ENCODE measurements at regions of chr11 and their contacts with region 1.

Region 1: DNA sequence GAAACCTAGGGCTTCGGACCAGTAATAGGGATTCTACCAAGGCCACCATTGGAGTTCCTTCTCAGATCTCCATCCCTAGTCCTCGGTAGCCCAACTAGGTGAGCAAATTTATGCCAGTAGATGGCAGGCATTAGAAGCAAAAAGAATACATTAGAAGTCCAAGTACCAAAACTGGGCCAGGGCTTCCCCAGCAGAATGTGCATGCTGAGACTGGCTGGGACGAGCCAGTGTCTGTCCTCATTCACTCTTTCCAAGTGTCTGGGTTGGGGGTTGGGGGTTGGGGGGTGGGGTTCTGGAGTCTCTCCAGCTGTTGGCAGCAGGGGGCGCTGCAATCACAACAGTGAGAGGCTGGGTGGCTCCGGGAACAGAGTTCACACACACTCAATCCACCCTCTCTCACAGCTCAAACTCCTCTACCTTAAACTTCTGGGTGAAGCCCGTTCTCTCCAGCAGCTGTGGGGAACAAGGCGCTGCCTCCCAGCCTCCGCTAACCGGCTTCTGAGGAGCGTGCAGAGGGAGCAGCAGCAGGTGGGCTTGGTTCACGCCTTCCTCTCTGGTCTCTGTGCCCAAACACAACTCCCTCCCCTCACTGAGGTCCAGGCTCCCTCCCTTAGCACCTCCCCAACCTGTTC is 57.5 kb downstream of the BTG4 start:
- DNase-seq: peak in 8 of 10 donors; percentile 23 to 70 (median 62)
- H3K4me3 ChIP-seq: no peak overlapping the region
- H3K27ac ChIP-seq: peak overlapping the region in 33 of 59 donors; percentile 6 to 94 (median 57)
- H3K27me3 ChIP-seq: peaks cover 0 to 5% (median 0%) of the 10 kb centered on the region in 45 donors
- CTCF ChIP-seq: peak in 53 of 56 donors; percentile 23 to 83 (median 65)

Region 2: DNA sequence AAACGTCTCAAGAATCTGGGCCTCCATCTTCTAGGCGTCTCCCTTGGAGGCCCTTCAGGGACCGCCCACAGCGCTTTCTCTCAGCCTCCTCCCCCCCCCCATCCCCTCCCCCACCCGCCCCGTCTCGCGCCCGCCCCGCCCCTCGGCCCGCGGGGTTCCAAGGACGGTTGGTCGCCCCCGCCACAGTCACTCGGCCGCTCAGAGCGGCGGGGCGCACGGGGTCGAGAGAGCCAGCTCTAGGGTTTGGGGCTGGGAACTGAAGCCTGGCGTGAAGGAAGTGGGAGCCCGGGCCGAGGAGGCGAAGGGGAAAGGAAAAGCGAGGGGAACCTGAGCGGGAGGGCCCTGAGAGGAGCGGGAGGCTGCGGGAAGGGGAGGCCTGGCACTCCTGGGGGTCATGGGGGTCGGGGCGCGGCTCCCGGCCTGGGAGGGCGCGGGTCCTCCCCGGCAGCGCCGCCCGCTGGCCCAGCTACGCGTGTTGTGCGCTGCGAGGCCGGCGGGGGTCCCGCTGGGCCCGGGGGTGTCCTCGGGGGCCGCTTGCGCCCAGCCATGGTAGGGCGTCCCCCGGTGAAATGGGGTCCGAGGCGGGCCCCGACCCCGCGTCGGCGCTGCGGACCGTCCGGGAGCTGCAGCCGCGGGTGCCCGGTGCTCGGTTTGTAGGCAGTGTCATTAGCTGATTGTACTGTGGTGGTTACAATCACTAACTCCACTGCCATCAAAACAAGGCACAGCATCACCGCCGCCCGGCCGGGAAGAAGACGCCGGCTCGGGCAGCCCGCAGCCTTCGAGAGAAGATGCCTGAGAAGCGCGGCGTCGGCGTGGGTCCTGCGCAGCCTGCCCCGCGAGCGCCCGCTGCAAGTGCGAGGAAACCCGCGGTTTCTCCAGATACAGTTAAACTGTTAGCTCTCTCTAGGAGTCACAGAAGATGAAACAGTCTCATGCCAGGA is 57.9 kb after region 1 on chr11 and contains the start of gene BTG4:
- intact Hi-C with region 1: loop called (anchors 5 kb)
- DNase-seq: peak in 4 of 10 donors; percentile 7 to 47 (median 30)
- H3K4me3 ChIP-seq: peak within 1 kb of the TSS; percentile 21 to 69 (median 56)
- H3K27ac ChIP-seq: peak within 1 kb of the TSS in 8 of 59 donors; percentile 6 to 47 (median 30)
- H3K27me3 ChIP-seq: peaks cover 0 to 49% (median 21%) of the 10 kb centered on the region in 45 donors
- CTCF ChIP-seq: peak in 8 of 56 donors; percentile 10 to 36 (median 20)
- total RNA-seq, gene BTG4: 0.29 to 1.1 (median 0.64) TPM in 11 of 120 experiments, not detected in the others

Region 3: GRCh38 chr11:111540114-111540936 is 85.6 kb after region 1 on chr11 and contains the start of gene LAYN:
- intact Hi-C with region 1: loop called in 1 of 2 experiments (anchors 10 kb)
- DNase-seq: peak in 9 of 10 donors; percentile 49 to 83 (median 61)
- H3K4me3 ChIP-seq: peak within 1 kb of the TSS; percentile 55 to 87 (median 73)
- H3K27ac ChIP-seq: peak within 1 kb of the TSS; percentile 1 to 92 (median 80)
- H3K27me3 ChIP-seq: peaks cover 0 to 45% (median 5%) of the 10 kb centered on the region in 45 donors
- CTCF ChIP-seq: peak in 5 of 56 donors; percentile 12 to 27 (median 24)
- total RNA-seq, gene LAYN: 4.3 to 39.1 (median 13.3) TPM

Region 4: DNA sequence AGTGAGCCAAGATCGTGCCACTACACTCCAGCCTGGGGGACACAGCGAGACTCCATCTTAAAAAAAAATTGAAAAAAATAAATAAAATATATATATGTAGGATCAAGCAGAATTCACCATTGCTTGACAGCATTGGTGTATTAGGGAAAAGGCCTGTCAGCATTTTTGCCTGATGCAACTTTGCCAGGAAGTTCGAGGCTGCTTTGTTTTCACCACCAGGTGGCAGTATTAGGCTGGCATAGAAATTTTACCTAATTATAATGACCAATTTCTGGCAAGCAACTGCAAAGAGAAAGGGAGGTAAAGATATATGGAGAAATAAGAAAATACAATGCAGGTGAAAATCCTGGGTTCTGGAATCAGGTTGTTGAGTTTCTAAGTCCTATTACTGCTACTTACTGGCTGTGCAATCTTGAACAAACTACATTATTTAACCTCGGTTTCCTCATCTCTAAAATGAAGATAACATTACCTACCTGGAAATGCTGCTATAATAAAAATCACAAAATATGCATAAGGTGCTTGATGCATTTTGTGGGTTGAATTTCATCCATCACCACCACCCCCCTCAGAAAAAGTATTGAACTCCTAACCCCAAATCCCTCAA is 110.5 kb after region 1 on chr11:
- intact Hi-C with region 1: loop called in 1 of 2 experiments (anchors 5 kb)
- DNase-seq: peak in 8 of 10 donors; percentile 49 to 85 (median 60)
- H3K4me3 ChIP-seq: no peak overlapping the region
- H3K27ac ChIP-seq: peak overlapping the region in 1 of 59 donors; percentile 30
- H3K27me3 ChIP-seq: no peaks in the 10 kb centered on the region
- CTCF ChIP-seq: peak; percentile 87 to 98 (median 95)

Region 5: DNA sequence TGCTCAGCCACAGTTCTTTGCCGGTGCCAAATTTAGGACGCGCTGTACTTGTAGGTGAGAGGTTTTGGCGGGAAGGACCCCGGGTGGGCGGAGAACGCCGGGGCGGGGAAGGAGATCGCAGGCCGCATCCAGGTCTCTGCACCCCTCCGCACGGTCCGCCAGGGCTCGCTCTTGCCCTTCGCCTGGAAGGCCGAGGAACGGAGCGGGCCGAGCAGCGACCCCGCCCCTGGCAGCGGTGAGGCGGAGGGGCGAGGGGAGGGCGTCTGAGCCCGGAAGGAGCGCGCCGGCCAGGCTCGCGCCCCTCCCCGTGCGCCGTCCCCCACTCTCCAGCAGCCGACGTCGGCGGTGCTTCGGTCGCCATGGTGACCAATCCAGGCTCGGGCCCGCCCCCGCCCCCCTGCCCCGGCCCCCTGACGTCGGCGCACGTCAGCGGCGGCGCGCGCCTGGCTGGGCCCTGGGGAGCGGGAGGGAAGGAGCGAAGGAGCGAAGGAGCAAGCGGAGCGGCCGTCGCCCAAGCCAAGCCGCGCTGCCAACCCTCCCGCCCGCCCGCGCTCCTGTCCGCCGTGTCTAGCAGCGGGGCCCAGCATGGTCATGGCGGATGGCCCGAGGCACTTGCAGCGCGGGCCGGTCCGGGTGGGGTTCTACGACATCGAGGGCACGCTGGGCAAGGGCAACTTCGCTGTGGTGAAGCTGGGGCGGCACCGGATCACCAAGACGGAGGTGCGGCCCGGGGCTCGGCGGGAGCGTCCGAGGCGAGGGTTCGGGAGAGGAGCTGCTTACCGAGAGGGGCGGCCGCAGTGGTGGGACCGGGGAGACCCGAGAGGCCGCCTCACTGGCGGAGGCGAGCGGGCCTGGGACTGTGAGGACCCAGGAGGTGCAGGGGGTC is 147.5 kb after region 1 on chr11 and contains the start of gene SIK2:
- intact Hi-C with region 1: loop called in 1 of 2 experiments (anchors 5 kb)
- DNase-seq: peak; percentile 89 to 97 (median 94)
- H3K4me3 ChIP-seq: peak within 1 kb of the TSS; percentile 61 to 100 (median 95)
- H3K27ac ChIP-seq: peak within 1 kb of the TSS; percentile 86 to 100 (median 98)
- H3K27me3 ChIP-seq: no peaks in the 10 kb centered on the region
- CTCF ChIP-seq: peak; percentile 53 to 99 (median 91)
- total RNA-seq, gene SIK2: 33.1 to 72.4 (median 50.6) TPM

Region 6: DNA sequence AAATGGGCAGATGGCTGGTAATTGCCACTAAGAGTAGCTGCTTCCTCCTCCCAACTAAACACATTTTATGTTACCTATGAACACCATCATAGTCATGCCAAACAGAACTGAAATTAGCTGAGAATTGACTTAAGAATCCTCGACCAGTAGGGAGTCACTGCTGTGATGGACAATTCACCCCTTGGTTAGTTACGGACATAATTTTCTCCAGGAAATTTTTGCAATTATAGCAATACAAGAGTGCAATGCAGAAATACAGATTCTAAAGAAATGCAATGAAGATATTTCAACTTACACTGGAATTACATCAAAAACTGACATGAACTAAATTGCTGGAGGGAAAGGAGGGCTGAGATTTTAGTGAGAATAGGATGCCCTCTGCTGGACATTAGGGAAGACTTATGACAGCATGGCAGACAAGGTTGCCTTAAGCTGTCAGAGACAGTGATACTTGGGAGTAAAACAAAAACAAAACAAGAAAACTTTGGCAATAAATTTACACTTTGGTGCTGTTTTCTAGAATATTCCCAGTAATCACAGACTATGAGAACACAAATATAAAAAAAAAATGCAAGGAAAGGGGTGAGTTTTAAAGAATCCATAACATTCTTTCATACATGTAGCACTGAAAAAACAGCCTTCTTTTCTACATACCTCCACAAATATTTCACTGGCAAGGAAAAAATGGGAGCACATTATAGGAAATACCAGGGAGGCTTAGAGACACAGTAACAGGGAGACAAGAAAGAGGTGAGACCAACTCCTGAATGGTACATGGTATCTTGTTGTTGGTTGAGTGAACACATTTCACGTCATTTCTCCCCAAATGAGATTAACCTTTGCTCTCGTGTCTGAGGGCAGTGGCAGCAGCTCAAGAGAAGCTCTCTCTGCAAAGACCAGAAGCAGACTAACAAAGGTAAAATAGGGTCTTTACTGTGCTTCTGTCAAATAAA is 322.7 kb after region 1 on chr11:
- intact Hi-C with region 1: loop called (anchors 5 kb)
- DNase-seq: peak in 2 of 10 donors; percentile 43 to 54
- H3K4me3 ChIP-seq: no peak overlapping the region
- H3K27ac ChIP-seq: peak overlapping the region in 50 of 59 donors; percentile 5 to 82 (median 62)
- H3K27me3 ChIP-seq: no peaks in the 10 kb centered on the region
- CTCF ChIP-seq: peak; percentile 61 to 97 (median 88)

Region 7: GRCh38 chr11:111841370-111842053 is 386.8 kb after region 1 on chr11:
- intact Hi-C with region 1: loop called (anchors 5 to 10 kb)
- DNase-seq: peak; percentile 85 to 98 (median 92)
- H3K4me3 ChIP-seq: peak overlapping the region in 10 of 59 donors; percentile 0 to 25 (median 15)
- H3K27ac ChIP-seq: peak overlapping the region in 48 of 59 donors; percentile 0 to 75 (median 44)
- H3K27me3 ChIP-seq: no peaks in the 10 kb centered on the region
- CTCF ChIP-seq: peak; percentile 86 to 99 (median 96)

Measured in dorsolateral prefrontal cortex (tissue), 120 donors.